ENCODE measurements at regions of chr14 and their contacts with region 1.

Region 1: GRCh38 chr14:38187589-38188018 is 20.1 kb upstream of the SSTR1 start:
- DNase-seq: no peak

Region 2: GRCh38 chr14:37889087-37889486 is 298.5 kb before region 1 on chr14:
- intact Hi-C with region 1: loop called in 1 of 2 experiments (anchors 5 kb)
- DNase-seq: no peak

Region 3: GRCh38 chr14:38145142-38145541 is 42.5 kb before region 1 on chr14:
- intact Hi-C with region 1: loop called in 1 of 2 experiments (anchors 1 kb)
- DNase-seq: no peak